Activated CD8-positive, alpha-beta T cell treated with anti-CD3 and anti-CD28 coated beads, Interleukin-2, amount 10 ng/mL, durations not matched to agents 7 days and 5 days (primary cell): ENCODE measurements at regions of chr9 and their contacts with region 1.

Region 1: DNA sequence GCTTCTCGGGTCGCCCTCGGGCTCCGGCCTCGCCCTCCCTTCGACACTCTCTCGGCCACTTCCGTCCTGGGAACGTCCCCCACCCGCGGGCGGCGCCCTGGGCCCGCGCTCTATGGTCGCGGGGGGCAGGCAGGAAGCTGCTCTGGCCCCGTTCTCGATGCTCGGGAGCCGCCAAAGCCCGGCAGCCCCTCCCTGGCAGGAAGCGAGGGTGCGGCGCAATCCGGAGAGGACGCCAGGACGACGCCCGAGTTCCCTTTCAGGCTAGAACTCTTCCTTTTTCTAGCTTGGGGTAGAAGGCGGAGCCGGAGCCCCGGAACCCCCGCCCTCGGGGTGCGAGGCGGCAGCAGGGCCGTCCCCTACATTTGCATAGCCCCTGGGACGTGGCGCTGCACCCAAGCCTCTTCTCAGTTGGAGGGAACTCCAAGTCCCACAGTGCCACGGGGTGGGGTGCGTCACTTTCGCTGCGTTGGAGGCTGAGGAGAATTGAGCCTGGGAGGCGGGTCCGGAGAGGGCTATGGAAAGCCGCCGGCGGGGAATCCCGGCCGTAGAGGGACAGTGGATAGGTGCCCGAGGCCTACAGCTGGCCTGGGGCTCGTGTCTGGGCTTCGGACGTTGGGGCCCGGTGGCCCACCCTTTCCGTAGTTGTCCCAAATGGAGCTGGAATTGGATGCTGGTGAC is at the starts of genes CREB3 and TLN1:
- DNase-seq: peak; percentile 99
- ATAC-seq: peak; percentile 93
- H3K4me3 Mint-ChIP-seq: no peak within 1 kb of the TSS
- H3K27ac Mint-ChIP-seq: peak within 1 kb of the TSS; percentile 89
- H3K4me1 Mint-ChIP-seq: peaks cover 23% of the 10 kb centered on the region
- H3K27me3 Mint-ChIP-seq: no peaks in the 10 kb centered on the region
- total RNA-seq, gene CREB3: 21.6 to 21.7 TPM
- total RNA-seq, gene TLN1: 448 to 450 TPM

Region 2: GRCh38 chr9:35611230-35611797 is 120.9 kb before region 1 on chr9:
- CTCF ChIA-PET with region 1: interaction called, 18 read pairs
- POLR2A ChIA-PET with region 1: interaction called, 3 read pairs
- DNase-seq: peak; percentile 73
- ATAC-seq: peak; percentile 87
- H3K4me3 Mint-ChIP-seq: no peak overlapping the region
- H3K27ac Mint-ChIP-seq: no peak overlapping the region
- H3K4me1 Mint-ChIP-seq: peaks cover 30% of the 10 kb centered on the region
- H3K27me3 Mint-ChIP-seq: no peaks in the 10 kb centered on the region

Region 3: GRCh38 chr9:35646533-35647265 is 85.6 kb before region 1 on chr9:
- CTCF ChIA-PET with region 1: interaction called, 33 read pairs
- POLR2A ChIA-PET with region 1: interaction called, 27 read pairs
- DNase-seq: peak; percentile 97
- ATAC-seq: peak; percentile 83
- H3K4me3 Mint-ChIP-seq: peak overlapping the region; percentile 97
- H3K27ac Mint-ChIP-seq: peak overlapping the region; percentile 96
- H3K4me1 Mint-ChIP-seq: peaks cover 67% of the 10 kb centered on the region
- H3K27me3 Mint-ChIP-seq: no peaks in the 10 kb centered on the region

Region 4: GRCh38 chr9:35664531-35665470 is 67.5 kb before region 1 on chr9 and contains the start of gene ARHGEF39:
- CTCF ChIA-PET with region 1: interaction called, 21 read pairs
- POLR2A ChIA-PET with region 1: interaction called, 7 read pairs
- DNase-seq: peak; percentile 84
- ATAC-seq: peak; percentile 84
- H3K4me3 Mint-ChIP-seq: peak within 1 kb of the TSS; percentile 86
- H3K27ac Mint-ChIP-seq: peak within 1 kb of the TSS; percentile 86
- H3K4me1 Mint-ChIP-seq: peaks cover 68% of the 10 kb centered on the region
- H3K27me3 Mint-ChIP-seq: no peaks in the 10 kb centered on the region
- total RNA-seq, gene ARHGEF39: 17.2 to 17.3 TPM

Region 5: GRCh38 chr9:35748858-35749514 is 16.7 kb after region 1 on chr9 and contains the starts of genes GBA2 and RGP1:
- CTCF ChIA-PET with region 1: interaction called, 118 read pairs
- POLR2A ChIA-PET with region 1: interaction called, 37 read pairs
- DNase-seq: peak; percentile 78
- ATAC-seq: peak; percentile 83
- H3K4me3 Mint-ChIP-seq: peak within 1 kb of the TSS; percentile 90
- H3K27ac Mint-ChIP-seq: peak within 1 kb of the TSS; percentile 87
- H3K4me1 Mint-ChIP-seq: peaks cover 39% of the 10 kb centered on the region
- H3K27me3 Mint-ChIP-seq: no peaks in the 10 kb centered on the region
- total RNA-seq, gene GBA2: 52.6 to 56.4 TPM
- total RNA-seq, gene RGP1: 22.1 to 22.9 TPM

Region 6: DNA sequence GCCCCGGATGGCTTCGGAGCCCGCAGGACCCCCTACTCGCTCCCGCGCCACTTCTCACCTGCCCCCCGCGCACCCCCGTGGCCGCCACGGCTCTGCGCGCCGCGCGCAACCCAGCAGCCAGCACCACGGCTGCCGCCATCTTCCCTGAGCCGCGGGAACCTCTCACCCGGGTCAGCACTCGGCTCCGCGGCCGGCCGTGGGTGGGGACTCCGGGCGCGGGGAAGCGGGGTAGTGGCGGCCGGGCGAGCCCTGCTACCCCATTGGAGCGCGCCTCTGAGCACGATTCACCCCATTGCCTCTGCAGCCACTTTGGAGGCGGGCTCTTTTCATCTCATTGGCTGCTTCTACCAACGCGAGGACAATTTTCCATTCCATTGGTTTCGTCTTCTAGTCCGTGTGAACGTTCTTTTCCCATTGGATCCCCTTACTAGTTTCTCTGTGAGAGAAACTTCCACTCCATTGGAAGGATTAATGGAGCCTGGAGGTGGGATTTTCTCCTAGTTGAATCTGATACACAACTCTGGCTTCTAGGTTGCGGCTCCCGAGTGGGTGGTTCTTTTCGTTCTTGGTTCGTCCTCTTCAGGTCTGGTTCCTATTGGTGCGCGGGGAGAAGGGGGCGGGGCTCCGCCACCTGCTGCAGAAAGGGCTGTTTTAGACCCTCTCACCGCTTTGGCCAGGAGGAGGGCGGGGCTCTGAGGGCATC is 82.7 kb after region 1 on chr9 and contains the start of gene HINT2:
- CTCF ChIA-PET with region 1: interaction called, 11 read pairs
- POLR2A ChIA-PET with region 1: interaction called, 4 read pairs
- DNase-seq: peak; percentile 100
- ATAC-seq: peak; percentile 82
- H3K4me3 Mint-ChIP-seq: peak within 1 kb of the TSS; percentile 91
- H3K27ac Mint-ChIP-seq: peak within 1 kb of the TSS; percentile 95
- H3K4me1 Mint-ChIP-seq: peaks cover 47% of the 10 kb centered on the region
- H3K27me3 Mint-ChIP-seq: peaks cover 14% of the 10 kb centered on the region
- total RNA-seq, gene HINT2: 74.7 to 76.8 TPM